ENCODE measurements at regions of chr6 and their contacts with region 1.

Region 1: DNA sequence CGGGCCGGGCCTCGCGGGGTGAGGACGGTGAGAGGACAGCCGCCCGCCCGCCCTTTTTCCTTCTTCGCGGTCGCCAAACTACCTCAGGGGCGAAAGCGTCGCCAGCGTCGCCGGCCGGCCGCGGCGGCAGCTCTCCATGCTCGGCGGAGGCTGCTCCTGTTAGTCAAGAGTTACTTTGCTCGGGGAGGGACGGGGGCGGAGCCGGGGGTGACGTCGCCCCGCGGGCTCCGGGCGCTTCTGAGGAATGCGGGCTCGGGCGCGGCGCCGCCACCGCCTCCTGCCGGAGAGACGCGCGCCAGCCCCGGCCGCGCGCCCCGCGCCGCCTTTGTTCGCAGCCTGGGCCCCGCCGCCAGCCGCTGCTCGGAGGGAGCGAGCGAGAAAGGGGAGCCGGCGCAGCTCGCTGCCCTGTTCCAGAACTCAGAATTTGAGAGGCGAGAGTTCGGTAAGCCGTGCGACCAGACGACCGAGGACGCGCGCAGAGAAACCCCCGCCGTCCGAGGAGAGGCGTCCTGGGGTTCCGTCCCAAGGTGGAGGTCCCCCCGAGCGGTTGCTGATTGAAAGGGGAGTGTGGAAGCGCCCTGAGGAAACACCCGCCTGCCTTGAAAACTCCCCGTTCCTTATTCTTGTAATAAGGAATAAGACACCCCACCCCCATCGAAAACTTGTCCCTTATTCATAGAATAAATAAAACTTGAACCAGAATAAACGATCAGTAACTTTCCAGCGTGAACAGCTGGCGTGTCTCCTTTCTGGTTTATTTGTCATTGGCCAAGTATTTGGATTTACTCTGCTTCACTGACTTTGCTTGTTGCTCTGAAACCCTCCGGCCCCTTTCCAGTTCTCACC is at the start of gene PTPRK:
- DNase-seq: peak; percentile 98
- H3K4me3 ChIP-seq: peak within 1 kb of the TSS; percentile 95
- H3K27ac ChIP-seq: peak within 1 kb of the TSS; percentile 88
- H3K4me1 ChIP-seq: peaks cover 27% of the 10 kb centered on the region
- H3K27me3 ChIP-seq: no peaks in the 10 kb centered on the region
- total RNA-seq, gene PTPRK: 23.1 and 34.5 TPM in 2 replicates

Region 2: DNA sequence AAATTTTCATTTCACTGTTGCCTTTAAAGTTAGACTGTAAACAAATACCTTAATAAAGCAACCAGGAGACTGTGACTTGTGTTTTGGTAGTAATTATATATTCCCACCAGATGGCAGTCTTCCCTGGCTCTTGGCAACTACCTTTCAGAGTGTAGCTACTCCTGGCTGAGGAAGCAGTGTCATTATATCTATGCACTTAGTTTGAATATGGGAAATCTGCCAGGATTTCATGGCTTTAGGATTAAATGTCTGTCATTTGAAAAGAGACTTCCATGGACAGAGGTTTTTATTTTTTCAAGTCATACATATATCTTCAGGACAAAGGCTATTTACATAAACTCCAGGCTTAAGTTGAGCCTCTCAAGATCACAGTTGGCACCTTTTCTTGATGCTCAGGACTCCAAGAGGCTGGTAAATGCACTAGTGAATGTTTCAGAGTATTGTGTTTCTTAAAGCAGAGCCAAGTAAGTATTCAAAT is 783.6 kb before region 1 on chr6:
- in situ Hi-C with region 1: loop called (anchors 25 kb)
- DNase-seq: peak; percentile 79
- H3K4me3 ChIP-seq: no peak overlapping the region
- H3K27ac ChIP-seq: no peak overlapping the region
- H3K4me1 ChIP-seq: peaks cover 4% of the 10 kb centered on the region; the same call in 1 of the 2 replicates
- H3K27me3 ChIP-seq: no peaks in the 10 kb centered on the region

Region 3: GRCh38 chr6:127855542-127856159 is 665.0 kb before region 1 on chr6:
- in situ Hi-C with region 1: loop called (anchors 25 kb)
- DNase-seq: peak; percentile 54
- H3K4me3 ChIP-seq: no peak overlapping the region
- H3K27ac ChIP-seq: no peak overlapping the region
- H3K4me1 ChIP-seq: peaks cover 14% of the 10 kb centered on the region
- H3K27me3 ChIP-seq: no peaks in the 10 kb centered on the region

Region 4: DNA sequence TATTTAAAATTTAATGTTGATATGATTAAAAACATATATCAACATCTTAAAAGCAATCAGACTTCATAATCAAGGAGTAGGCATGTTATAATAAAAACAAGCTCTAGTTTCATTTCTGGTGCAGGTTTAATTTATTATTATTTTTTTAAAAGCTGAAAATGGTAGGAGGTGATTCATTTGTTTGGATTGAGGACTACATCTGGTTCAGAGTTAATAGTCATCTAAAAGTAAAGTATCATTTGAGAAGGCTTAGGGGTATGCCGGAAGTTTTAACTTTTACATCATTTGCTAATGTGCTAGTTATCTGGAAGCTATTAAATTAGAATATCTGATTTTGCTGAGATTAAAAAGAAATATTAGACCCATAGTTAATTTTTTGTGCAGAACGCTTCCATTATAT is 192.8 kb after region 1 on chr6:
- in situ Hi-C with region 1: loop called (anchors 10 kb)
- DNase-seq: peak; percentile 71
- H3K4me3 ChIP-seq: 0 out of 2 replicates have a peak overlapping the region, but pooled peaks have one; percentile 2
- H3K27ac ChIP-seq: no peak overlapping the region
- H3K4me1 ChIP-seq: peaks cover 24% of the 10 kb centered on the region
- H3K27me3 ChIP-seq: no peaks in the 10 kb centered on the region